AG04450 (cell line): ENCODE measurements at regions of chr2 and their contacts with region 1.

Region 1: DNA sequence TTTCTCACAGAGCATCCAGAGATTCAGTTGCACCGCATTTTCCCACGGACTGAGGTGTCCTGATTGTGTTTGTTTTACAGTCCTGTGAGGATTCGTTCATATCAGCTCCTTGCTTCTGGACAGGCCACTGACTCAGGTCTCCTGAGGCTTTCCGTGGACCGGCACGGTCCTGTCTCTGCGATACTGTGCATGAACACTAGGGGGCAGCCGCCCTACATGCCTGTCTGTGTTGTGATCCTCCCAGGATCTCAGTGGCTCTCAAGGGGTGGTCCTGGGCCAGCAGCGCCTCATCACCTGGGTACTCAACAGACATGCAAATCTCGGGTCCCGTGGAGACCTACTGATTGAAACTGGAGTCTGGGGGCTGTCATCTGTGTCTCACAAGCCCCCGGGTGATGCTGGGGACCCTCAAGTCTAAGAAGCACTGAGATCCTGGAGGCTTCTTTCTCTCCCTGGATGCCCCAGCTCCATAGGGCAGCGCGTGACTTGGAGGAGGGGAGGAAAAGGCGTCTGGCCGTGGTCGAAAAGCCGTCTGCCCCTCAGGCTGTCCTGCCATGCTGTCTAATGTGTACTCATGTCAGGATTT is 28.9 kb downstream of the IL1R2 start:
- DNase-seq: peak; percentile 69
- H3K4me3 ChIP-seq: no peak overlapping the region
- H3K27ac ChIP-seq: no peak overlapping the region
- H3K27me3 ChIP-seq: no peaks in the 10 kb centered on the region
- CTCF ChIP-seq: peak; percentile 99

Region 2: GRCh38 chr2:101577173-101577572 is 443.5 kb before region 1 on chr2:
- CTCF ChIA-PET with region 1: no interaction called
- POLR2A ChIA-PET with region 1: no interaction called
- DNase-seq: no peak
- H3K4me3 ChIP-seq: no peak overlapping the region
- H3K27ac ChIP-seq: no peak overlapping the region
- H3K27me3 ChIP-seq: peaks cover 8% of the 10 kb centered on the region
- CTCF ChIP-seq: no peak

Region 3: DNA sequence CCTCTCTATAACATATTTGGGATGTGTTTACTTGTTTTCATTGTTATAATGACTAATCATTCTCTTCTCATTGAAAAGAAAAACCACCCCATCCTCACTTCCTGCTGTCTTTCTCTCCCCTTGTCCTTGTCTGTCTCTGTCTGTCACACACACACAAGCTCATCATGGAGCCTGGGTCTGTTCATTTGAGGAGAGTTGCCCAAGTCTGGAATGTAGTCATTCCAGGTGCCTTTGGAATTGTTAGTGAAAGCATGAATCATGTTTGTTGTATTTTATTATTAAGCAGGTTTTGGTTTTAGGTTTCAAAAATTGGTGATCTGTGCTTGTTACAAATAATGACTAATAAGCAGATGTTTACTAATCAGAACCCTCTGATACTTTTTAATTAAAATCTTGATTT is 162.4 kb before region 1 on chr2:
- CTCF ChIA-PET with region 1: no interaction called
- POLR2A ChIA-PET with region 1: no interaction called
- DNase-seq: no peak
- H3K4me3 ChIP-seq: no peak overlapping the region
- H3K27ac ChIP-seq: no peak overlapping the region
- H3K27me3 ChIP-seq: no peaks in the 10 kb centered on the region
- CTCF ChIP-seq: no peak

Region 4: GRCh38 chr2:102033031-102033749 is 12.5 kb after region 1 on chr2:
- CTCF ChIA-PET with region 1: interaction called, 21 read pairs
- POLR2A ChIA-PET with region 1: no interaction called
- DNase-seq: peak; percentile 69
- H3K4me3 ChIP-seq: no peak overlapping the region
- H3K27ac ChIP-seq: peak overlapping the region; percentile 75
- H3K27me3 ChIP-seq: no peaks in the 10 kb centered on the region
- CTCF ChIP-seq: peak; percentile 47

Region 5: DNA sequence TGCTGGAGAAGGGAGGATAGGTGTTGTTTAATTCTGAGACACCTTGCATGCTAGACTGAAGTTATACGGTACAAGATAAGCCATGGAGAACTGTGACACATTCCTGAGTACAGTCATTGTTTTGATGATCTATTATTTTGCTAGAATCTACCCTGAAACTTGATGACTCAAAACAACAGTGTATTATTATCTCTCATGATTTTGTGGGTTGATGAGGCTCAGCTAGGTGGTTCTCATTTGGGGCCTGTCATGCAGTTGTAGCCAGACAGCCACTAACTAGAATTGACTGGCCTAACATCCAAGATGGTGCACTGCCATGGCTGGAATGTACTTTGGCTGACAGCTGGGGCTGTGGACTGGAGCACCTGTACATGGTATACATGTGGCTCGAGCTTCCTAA is 116.4 kb after region 1 on chr2:
- CTCF ChIA-PET with region 1: interaction called, 14 read pairs
- POLR2A ChIA-PET with region 1: interaction called, 3 read pairs
- DNase-seq: no peak
- H3K4me3 ChIP-seq: no peak overlapping the region
- H3K27ac ChIP-seq: no peak overlapping the region
- H3K27me3 ChIP-seq: no peaks in the 10 kb centered on the region
- CTCF ChIP-seq: no peak

Region 6: DNA sequence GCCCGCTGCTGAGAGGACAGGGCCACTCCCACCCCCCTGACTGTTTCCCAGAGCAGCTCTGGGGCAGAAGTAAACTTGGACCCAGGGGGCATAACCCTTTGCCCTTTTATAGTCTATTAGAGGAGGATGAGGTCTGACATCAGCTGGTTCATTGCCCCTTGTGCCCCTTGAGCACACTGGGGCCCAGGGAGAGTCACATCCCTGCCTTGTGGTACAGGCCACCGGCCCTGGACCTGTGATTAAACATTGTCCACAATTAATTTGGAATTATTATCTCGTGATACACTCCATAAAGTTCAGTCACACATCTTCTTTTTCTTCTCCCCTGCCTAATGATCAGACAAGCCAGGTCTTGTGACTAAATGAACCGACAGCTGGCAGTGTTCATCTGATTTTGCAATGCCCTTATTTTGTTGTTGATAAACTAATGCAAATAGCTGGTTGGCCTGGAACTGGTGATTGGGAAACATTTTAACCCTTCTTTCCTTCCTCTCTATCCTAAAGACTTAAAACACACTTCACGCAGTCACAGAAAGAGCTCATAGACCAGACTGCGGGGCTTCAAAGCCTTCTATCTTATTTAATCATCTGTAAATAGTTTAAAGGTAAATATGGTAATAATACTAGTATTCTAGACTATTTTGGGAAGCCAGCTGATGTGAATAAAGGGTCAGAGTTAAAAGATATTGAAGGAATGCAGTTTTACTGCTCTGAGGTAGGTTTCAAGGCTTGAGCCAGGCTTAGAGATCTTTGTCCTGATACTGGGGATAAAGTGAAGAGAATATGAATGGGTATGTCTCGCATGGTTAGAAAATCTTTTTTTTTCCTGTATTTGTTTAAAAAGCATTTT is 135.2 kb after region 1 on chr2:
- CTCF ChIA-PET with region 1: interaction called, 21 read pairs
- POLR2A ChIA-PET with region 1: no interaction called
- DNase-seq: no peak
- H3K4me3 ChIP-seq: no peak overlapping the region
- H3K27ac ChIP-seq: peak overlapping the region; percentile 80
- H3K27me3 ChIP-seq: no peaks in the 10 kb centered on the region
- CTCF ChIP-seq: no peak

Region 7: GRCh38 chr2:102187496-102188150 is 166.9 kb after region 1 on chr2:
- CTCF ChIA-PET with region 1: interaction called, 11 read pairs
- POLR2A ChIA-PET with region 1: no interaction called
- DNase-seq: no peak
- H3K4me3 ChIP-seq: peak overlapping the region; percentile 61
- H3K27ac ChIP-seq: no peak overlapping the region
- H3K27me3 ChIP-seq: no peaks in the 10 kb centered on the region
- CTCF ChIP-seq: peak; percentile 52